Mammary epithelial cell (primary cell): ENCODE measurements at regions of chr10 and their contacts with region 1.

Region 1: GRCh38 chr10:104209575-104210198 is 22.5 kb downstream of the CFAP43 start:
- DNase-seq: peak; percentile 21
- H3K4me3 ChIP-seq: no peak overlapping the region
- H3K27ac ChIP-seq: no peak overlapping the region
- H3K4me1 ChIP-seq: no peaks in the 10 kb centered on the region
- H3K27me3 ChIP-seq: no peaks in the 10 kb centered on the region
- CTCF ChIP-seq: peak; percentile 54 to 75

Region 2: GRCh38 chr10:104028146-104028545 is 181.5 kb before region 1 on chr10:
- CTCF ChIA-PET with region 1: no interaction called
- dilution Hi-C with region 1: no loop called
- in situ Hi-C with region 1: no loop called
- intact Hi-C with region 1: loop called (anchors 10 kb)
- DNase-seq: peak; percentile 46
- H3K4me3 ChIP-seq: no peak overlapping the region
- H3K27ac ChIP-seq: no peak overlapping the region
- H3K4me1 ChIP-seq: no peaks in the 10 kb centered on the region
- H3K27me3 ChIP-seq: no peaks in the 10 kb centered on the region
- CTCF ChIP-seq: peak; percentile 50 to 52

Region 3: DNA sequence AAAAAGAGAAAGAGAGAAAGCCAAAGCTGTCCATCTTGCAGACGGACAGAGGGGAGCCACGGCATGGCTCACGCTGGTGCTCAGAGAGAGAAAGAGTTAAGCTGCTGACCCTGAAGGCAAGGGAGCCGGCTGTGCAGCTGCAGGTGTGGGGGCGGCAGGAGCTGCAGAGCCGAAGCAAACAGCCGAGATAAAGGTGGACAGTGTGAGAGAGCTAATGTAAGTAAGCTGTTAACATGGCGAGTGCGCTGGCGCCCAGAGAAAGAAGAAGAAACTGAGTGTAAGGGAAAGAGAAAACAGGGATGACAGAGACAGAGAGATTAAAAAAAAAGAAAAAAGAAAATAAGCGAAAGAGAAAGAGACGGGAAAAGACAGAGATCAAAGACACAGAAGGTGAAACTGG is 142.2 kb before region 1 on chr10:
- CTCF ChIA-PET with region 1: no interaction called
- dilution Hi-C with region 1: no loop called
- in situ Hi-C with region 1: loop called in 1 of 2 experiments (anchors 10 kb)
- intact Hi-C with region 1: no loop called
- DNase-seq: no peak
- H3K4me3 ChIP-seq: no peak overlapping the region
- H3K27ac ChIP-seq: no peak overlapping the region
- H3K4me1 ChIP-seq: no peaks in the 10 kb centered on the region
- H3K27me3 ChIP-seq: no peaks in the 10 kb centered on the region
- CTCF ChIP-seq: no peak

Region 4: DNA sequence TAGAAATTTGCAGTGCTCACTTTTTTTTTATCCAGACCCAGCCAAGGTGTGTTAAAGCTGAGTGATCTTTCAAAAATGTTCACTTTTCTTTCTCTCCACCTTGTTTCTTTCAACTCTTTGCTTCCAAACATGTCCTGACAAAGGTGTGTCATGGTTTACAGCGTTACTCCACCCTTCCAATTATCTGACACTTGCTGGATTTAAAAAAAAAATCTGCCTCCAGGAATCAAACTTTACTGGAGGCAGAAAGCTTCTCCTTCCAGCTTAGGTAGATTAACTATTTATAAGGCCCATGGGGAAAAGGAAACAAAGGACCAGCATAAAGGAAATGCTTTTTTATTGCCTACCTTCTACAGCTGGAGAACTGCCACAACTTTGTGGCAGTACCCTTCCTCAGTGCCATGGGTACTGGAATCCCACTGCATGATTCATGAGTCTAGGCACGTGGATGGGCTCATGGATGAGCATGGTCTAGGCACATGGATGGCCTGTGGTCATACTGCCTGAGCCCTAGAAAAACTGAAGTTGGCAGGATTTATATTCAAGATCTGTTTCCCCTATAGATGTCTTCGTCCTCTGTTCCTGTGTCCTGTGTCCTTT is 123.8 kb before region 1 on chr10 and contains the start of gene COL17A1:
- CTCF ChIA-PET with region 1: interaction called, 3 read pairs
- dilution Hi-C with region 1: no loop called
- in situ Hi-C with region 1: no loop called
- intact Hi-C with region 1: loop called (anchors 2 kb)
- DNase-seq: peak; percentile 88
- H3K4me3 ChIP-seq: peak within 1 kb of the TSS; percentile 68 to 99 (median 96)
- H3K27ac ChIP-seq: peak within 1 kb of the TSS; percentile 100
- H3K4me1 ChIP-seq: peaks cover 41% of the 10 kb centered on the region
- H3K27me3 ChIP-seq: no peaks in the 10 kb centered on the region
- CTCF ChIP-seq: no peak
- total RNA-seq, gene COL17A1: 1,287 to 2,380 TPM

Region 5: DNA sequence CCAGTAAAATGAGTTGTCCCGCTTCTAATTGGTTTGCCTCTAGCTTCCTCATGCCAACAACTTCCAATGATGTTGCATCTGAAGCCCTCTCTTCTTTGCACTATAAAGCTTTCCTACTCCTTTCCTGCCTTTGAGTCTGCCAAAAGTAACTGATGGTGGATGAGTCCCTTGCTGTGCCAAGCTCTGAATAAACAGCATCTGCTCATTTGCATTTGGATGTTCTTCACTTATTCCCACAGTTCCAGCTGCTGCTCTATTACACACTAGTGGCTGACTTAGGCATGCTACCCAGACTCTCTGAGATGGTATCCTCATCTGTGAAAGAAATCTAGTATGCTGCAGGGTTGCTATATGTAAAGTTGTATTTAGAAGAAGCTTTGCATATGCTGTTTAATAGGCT is 62.8 kb before region 1 on chr10:
- CTCF ChIA-PET with region 1: no interaction called
- dilution Hi-C with region 1: no loop called
- in situ Hi-C with region 1: no loop called
- intact Hi-C with region 1: no loop called
- DNase-seq: no peak
- H3K4me3 ChIP-seq: no peak overlapping the region
- H3K27ac ChIP-seq: no peak overlapping the region
- H3K4me1 ChIP-seq: no peaks in the 10 kb centered on the region
- H3K27me3 ChIP-seq: no peaks in the 10 kb centered on the region
- CTCF ChIP-seq: no peak